AG04449 (cell line): ENCODE measurements at regions of chr2 and their contacts with region 1.

Region 1: DNA sequence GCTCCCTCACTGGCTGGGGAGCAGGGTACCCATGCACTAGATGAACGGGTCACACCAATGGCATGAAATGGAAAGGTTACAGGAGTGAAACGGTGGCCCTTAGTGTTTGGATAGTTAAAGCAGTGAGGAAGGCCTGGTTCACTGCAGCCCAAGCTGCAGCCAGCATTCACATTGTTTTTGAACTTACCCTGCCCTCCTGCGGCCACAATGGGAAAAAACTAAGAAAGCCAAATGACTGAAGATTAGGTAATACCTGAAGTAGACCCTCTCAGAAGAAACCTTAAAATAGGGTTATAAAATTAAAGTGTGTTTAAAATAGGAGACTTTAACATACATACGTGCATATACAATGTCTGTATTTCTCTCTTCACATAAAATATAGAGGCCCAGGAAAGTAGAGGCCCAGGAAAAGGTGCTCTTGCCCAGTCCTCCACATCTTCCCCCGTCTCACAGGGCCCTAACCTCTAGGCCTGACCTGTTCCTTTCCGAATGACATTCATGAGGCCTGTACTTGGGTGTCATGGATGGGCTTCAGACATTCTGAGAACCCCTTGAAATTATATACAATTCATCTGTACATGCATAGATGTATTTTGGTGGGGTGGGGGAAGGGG is 33.3 kb downstream of the DOK1 start:
- DNase-seq: no peak
- H3K4me3 ChIP-seq: no peak overlapping the region
- CTCF ChIP-seq: peak; percentile 60

Region 2: GRCh38 chr2:74212702-74213410 is 374.9 kb before region 1 on chr2:
- CTCF ChIA-PET with region 1: no interaction called
- POLR2A ChIA-PET with region 1: no interaction called
- DNase-seq: no peak
- H3K4me3 ChIP-seq: no peak overlapping the region
- CTCF ChIP-seq: no peak

Region 3: DNA sequence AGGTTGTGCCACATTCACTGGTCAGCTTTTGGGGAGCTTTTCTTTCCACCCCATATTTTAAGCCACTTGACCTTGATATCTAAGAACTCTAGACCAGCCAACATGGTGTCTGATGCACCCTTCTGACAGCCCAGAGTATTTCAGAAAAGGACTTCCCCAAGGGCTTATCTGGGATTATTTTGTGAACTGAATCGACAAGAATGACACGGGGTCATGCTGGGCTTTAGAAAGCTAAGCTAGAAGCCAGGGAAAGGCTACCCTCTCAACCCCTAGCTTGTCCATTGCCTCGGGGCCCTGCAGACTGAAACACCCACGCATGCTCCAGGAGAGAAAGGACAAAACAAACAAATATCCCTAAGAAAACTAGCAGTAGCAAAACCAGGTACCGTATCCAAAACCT is 260.6 kb before region 1 on chr2:
- CTCF ChIA-PET with region 1: no interaction called
- POLR2A ChIA-PET with region 1: no interaction called
- DNase-seq: no peak
- H3K4me3 ChIP-seq: no peak overlapping the region
- CTCF ChIP-seq: no peak

Region 4: GRCh38 chr2:74458132-74458925 is 129.4 kb before region 1 on chr2 and contains the start of gene WBP1:
- CTCF ChIA-PET with region 1: interaction called, 25 read pairs
- POLR2A ChIA-PET with region 1: no interaction called
- DNase-seq: peak; percentile 100
- H3K4me3 ChIP-seq: peak within 1 kb of the TSS; percentile 74
- CTCF ChIP-seq: no peak

Region 5: DNA sequence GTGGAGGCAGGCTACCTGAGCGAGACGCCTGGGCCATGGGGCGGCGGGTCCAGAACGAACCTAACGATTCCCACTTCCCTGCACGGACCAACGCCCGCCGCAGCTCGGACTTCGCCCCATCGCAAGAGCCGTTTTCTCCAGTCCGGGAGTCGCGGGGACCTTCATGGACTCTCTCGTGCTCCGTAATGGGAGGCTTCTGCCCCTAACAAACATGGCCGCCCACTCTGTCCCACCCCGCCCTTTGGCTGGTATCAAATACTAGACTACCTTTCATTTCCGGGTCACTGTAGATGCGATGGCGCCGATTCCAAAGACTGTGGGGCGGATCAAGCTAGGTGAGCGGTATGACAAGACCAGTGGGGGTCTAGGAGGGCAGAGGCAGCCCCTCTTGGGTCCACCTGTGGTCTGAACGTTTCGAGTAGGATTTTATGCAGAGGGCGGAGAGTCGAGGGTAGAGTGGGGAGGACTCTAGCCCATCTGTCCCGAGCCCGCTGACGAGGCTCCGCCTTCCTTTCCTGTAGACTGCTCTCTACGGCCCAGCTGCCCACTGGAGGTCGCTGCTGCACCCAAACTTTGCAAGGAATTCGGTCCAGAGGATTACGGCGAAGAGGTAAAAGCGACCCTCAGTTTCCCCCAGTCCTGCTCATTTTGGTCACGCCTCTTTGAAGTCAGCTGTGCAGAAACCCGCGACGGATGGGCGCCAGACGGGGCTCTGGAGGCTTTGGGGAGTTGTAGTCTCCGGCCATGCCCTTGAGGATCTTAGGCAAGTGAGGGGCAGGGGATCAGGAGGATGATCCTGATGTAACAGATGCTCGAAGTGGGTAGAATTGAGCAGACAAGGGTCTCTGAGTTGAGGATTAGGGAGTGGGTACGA is 104.7 kb before region 1 on chr2 and contains the starts of genes CCDC142 and TTC31:
- CTCF ChIA-PET with region 1: interaction called, 401 read pairs
- POLR2A ChIA-PET with region 1: interaction called, 10 read pairs
- DNase-seq: peak; percentile 58
- H3K4me3 ChIP-seq: peak within 1 kb of the TSS; percentile 99
- CTCF ChIP-seq: peak; percentile 88

Region 6: GRCh38 chr2:74529357-74530238 is 58.2 kb before region 1 on chr2 and contains the starts of genes AUP1 and HTRA2:
- CTCF ChIA-PET with region 1: interaction called, 137 read pairs
- POLR2A ChIA-PET with region 1: interaction called, 9 read pairs
- DNase-seq: peak; percentile 93
- H3K4me3 ChIP-seq: peak within 1 kb of the TSS; percentile 99
- CTCF ChIP-seq: no peak

Region 7: GRCh38 chr2:74553892-74554645 is 33.7 kb before region 1 on chr2 and contains the start of gene LOXL3:
- CTCF ChIA-PET with region 1: interaction called, 43 read pairs
- POLR2A ChIA-PET with region 1: interaction called, 6 read pairs
- DNase-seq: peak; percentile 65
- H3K4me3 ChIP-seq: peak within 1 kb of the TSS; percentile 92
- CTCF ChIP-seq: no peak

Region 8: DNA sequence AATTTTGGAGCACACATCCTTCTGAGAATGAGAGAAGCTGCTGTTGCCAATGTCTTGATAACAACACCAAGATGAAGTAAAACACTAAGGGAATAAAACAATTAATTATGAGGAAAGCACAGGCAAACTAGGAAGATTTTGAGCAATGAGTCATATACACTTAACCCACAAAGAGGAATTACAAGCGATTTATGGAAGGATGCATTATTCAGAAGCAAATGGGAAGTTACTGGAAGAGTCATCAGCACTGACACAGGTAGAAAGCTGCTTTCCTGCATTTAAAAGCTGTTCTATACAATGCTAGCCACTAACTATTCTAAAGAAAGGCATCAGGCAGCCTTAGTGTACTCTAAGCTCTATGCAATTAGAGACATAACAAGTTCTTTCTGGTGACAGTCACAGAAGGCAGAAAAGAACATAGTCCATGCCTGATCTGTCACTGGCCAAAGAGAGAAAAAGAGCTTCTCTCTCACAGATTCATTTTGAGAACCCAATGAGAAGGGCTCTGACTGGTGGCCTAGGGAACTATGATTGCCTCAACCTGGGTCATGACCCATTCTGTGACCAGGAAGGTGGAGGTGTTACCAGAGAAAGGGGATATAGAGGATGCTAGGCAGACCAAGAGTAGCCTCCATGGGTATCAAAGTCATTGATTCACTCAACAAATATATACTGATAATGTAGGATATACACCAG is 15.0 kb after region 1 on chr2:
- CTCF ChIA-PET with region 1: interaction called, 86 read pairs
- POLR2A ChIA-PET with region 1: no interaction called
- DNase-seq: peak; percentile 21
- H3K4me3 ChIP-seq: no peak overlapping the region
- CTCF ChIP-seq: no peak